ENCODE measurements at regions of chrX and their contacts with region 1.

Region 1: DNA sequence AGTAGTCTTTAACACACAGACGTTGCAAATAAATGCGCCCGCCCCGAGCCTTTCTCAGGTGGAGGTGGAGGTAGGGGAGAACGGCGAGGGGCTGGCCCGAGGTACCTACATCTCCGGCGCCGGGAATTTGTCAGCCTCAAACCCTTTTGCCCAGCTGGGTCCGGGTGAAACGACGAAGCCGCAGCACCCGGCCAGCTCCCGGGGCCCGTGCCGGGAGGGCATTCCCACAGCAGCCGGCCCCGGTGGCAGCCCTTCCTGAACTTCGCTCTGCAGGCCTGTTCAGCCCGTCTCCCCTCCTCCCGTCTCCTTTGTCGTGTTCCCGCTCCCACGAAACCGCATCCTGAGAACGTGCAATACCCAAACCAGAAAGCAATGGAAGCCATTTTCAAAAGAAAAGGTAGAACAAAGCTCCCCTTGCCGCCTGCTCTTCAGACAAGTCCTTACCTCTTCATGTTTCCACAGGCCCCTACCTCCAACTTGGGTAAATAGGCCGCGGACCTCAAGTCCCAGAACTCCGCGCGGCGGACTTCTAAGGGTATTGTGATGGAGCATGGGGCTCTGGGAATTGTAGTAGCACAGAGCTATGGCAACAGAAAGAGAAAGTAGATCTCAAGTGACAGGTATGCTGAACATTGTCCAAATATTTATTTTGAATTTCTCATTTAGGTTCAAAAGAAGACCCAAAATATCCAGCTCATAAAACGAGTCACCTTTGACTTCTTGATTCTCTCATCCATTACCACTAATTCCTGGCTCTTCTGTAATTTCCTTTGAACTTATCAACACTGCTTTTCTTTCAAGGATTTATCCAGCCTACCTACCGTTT is at the start of gene RBM41:
- DNase-seq: peak; percentile 69 to 88 (median 75)
- H3K4me3 ChIP-seq: peak within 1 kb of the TSS; percentile 72 to 73
- H3K4me3 Mint-ChIP-seq: peak within 1 kb of the TSS; percentile 98 to 100 (median 99)
- H3K27ac ChIP-seq: peak within 1 kb of the TSS; percentile 59
- H3K27ac Mint-ChIP-seq: peak within 1 kb of the TSS; percentile 93 to 98 (median 97)
- H3K4me1 ChIP-seq: peaks cover 17% of the 10 kb centered on the region
- H3K4me1 Mint-ChIP-seq: peaks cover 22 to 47% (median 33%) of the 10 kb centered on the region in 4 donors
- H3K27me3 ChIP-seq: no peaks in the 10 kb centered on the region
- H3K27me3 Mint-ChIP-seq: no peaks in the 10 kb centered on the region
- total RNA-seq, gene RBM41: 27.8 to 29.8 TPM

Region 2: DNA sequence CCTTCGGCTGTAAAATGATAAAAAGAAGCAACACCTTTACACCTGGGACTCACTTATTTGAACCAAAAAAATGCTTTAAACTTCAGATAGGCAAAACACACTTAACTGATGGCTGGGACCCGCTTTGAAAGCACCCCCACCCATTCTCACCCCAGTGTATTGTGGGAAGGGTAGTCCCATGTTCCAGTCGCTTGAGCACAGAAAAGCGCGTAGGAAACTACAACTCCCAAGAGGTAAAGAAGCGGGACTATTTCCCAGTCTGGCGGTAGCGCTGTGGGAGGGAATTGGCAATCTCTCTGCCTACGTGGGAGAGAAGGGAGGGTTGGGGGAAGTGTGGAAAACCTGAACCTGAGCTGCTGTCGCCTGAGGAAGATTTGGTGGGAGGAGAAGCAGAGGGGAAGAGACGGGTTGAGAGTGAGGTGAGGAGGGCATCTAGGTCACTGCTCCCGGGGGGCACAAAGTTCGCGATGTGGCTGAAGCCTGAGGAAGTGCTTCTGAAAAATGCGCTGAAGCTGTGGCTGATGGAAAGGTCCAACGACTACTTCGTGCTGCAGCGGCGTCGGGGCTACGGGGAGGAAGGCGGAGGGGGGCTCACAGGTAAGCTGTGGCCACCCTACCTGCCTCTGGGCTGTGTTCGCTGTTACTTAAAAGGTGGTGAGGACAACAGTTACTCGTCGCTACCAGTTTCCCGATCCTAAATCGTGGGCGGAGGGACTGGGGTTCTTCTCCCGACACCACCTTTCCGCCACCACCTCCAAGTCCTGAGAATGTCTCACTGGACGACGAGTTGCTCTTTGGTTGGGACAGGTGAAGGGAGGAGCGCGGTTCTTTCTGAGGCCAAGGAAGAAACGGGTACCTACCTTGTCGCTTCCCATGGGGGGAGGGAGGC is 315.9 kb before region 1 on chrX and contains the start of gene TBC1D8B:
- CTCF ChIA-PET with region 1: no interaction called
- POLR2A ChIA-PET with region 1: no interaction called
- intact Hi-C with region 1: loop called (anchors 10 kb)
- DNase-seq: peak; percentile 5 to 36 (median 20)
- H3K4me3 ChIP-seq: peak within 1 kb of the TSS; percentile 36 to 52
- H3K4me3 Mint-ChIP-seq: peak within 1 kb of the TSS; percentile 89 to 97 (median 92)
- H3K27ac ChIP-seq: no peak within 1 kb of the TSS
- H3K27ac Mint-ChIP-seq: peak within 1 kb of the TSS in 4 of 7 donors; percentile 74 to 86 (median 82)
- H3K4me1 ChIP-seq: peaks cover 3% of the 10 kb centered on the region
- H3K4me1 Mint-ChIP-seq: peaks cover 6 to 17% (median 12%) of the 10 kb centered on the region in 4 donors
- H3K27me3 ChIP-seq: peaks cover 3% of the 10 kb centered on the region
- H3K27me3 Mint-ChIP-seq: peaks cover 4 to 11% of the 10 kb centered on the region in 2 donors
- total RNA-seq, gene TBC1D8B: 2.9 to 3.8 TPM

Region 3: GRCh38 chrX:107205770-107206696 is 87.5 kb after region 1 on chrX and contains the starts of genes DNAAF6 and NUP62CL:
- CTCF ChIA-PET with region 1: no interaction called
- POLR2A ChIA-PET with region 1: no interaction called
- intact Hi-C with region 1: loop called (anchors 5 kb)
- DNase-seq: peak; percentile 64 to 75 (median 70)
- H3K4me3 ChIP-seq: peak within 1 kb of the TSS; percentile 42 to 63
- H3K4me3 Mint-ChIP-seq: peak within 1 kb of the TSS; percentile 85 to 94 (median 91)
- H3K27ac ChIP-seq: peak within 1 kb of the TSS; percentile 43
- H3K27ac Mint-ChIP-seq: peak within 1 kb of the TSS in 6 of 7 donors; percentile 79 to 93 (median 88)
- H3K4me1 ChIP-seq: no peaks in the 10 kb centered on the region
- H3K4me1 Mint-ChIP-seq: peaks cover 2 to 9% (median 7%) of the 10 kb centered on the region in 4 donors
- H3K27me3 ChIP-seq: no peaks in the 10 kb centered on the region
- H3K27me3 Mint-ChIP-seq: peaks cover 0 to 2% of the 10 kb centered on the region in 2 donors
- total RNA-seq, gene DNAAF6: not detected
- total RNA-seq, gene NUP62CL: 2.3 to 2.7 TPM